ENCODE measurements at regions of chr16 and their contacts with region 1.

Region 1: DNA sequence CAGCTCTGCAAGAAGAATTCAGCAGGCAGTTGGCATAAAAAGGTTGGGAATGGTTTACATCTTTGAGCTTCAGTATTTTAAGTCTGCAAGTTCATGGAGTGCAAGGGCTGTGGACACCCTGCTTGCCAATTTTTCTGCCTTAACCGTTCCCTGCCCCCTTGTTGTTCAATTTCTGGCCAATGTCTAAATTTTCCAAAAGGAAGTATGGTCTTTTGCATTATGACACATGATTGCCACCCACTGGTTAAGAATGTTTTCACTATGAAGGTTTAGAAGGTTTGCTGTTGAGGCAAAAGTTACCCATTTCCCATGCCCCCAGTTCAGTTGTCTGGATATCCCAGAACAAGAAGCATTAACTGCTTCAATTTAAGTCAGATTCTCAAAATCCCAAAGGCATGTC is 441.9 kb downstream of the CDH13 start:
- DNase-seq: peak; percentile 49
- H3K4me3 ChIP-seq: no peak overlapping the region
- H3K27ac ChIP-seq: peak overlapping the region; percentile 49
- H3K27me3 ChIP-seq: no peaks in the 10 kb centered on the region
- CTCF ChIP-seq: peak; percentile 45

Region 2: GRCh38 chr16:82639666-82640336 is 428.9 kb before region 1 on chr16:
- in situ Hi-C with region 1: loop called (anchors 25 kb)
- DNase-seq: peak; percentile 81
- H3K4me3 ChIP-seq: no peak overlapping the region
- H3K27ac ChIP-seq: peak overlapping the region; percentile 93
- H3K27me3 ChIP-seq: no peaks in the 10 kb centered on the region
- CTCF ChIP-seq: peak; percentile 91